Activated CD4-positive, alpha-beta memory T cell treated with anti-CD3 and anti-CD28 coated beads for 36 hours (primary cell): ENCODE measurements at regions of chr12 and their contacts with region 1.

Region 1: DNA sequence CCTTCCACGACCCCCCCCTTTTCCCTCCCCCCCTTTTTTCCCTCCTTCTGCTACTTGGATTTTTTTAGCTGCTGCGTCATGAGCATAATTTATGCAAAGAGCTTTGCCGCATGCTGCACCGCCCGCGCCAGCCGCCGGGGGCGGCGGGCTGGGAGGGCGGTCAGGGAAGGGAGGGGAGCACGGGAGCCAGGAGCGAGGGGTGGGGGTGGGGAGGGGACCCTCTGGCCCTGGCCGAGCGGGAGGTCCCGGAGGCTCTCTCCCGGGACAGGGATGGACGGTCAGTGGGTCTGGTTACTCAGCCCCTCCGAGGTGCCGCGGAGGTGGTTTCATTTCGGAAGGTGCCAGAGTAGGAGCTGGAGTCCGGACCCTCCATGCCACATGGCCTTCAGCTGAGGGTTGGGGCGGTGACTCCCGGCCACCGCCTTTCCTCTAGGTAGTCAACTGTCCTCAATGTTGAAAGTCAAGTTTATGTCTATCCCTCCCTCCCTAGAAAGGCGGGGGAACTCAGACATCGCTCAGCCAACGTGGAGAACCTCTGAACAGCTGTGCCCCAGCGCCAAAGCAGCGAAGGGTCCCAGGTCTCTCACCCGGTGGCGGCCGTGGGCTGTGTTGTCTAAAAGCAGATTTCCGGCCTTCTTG is at the start of gene POU6F1:
- DNase-seq: peak; percentile 77
- H3K4me3 Mint-ChIP-seq: peak within 1 kb of the TSS; percentile 79
- H3K27ac Mint-ChIP-seq: peak within 1 kb of the TSS; percentile 88
- H3K4me1 Mint-ChIP-seq: peaks cover 18% of the 10 kb centered on the region
- H3K27me3 Mint-ChIP-seq: no peaks in the 10 kb centered on the region
- total RNA-seq, gene POU6F1: 12.1 to 12.4 TPM

Region 2: GRCh38 chr12:51047655-51048540 is 170.2 kb before region 1 on chr12 and contains the start of gene LETMD1:
- CTCF ChIA-PET with region 1: interaction called, 3 read pairs
- POLR2A ChIA-PET with region 1: interaction called, 4 read pairs
- intact Hi-C with region 1: loop called (anchors 1 kb)
- DNase-seq: peak; percentile 95
- H3K4me3 Mint-ChIP-seq: peak within 1 kb of the TSS; percentile 97
- H3K27ac Mint-ChIP-seq: peak within 1 kb of the TSS; percentile 96
- H3K4me1 Mint-ChIP-seq: peaks cover 31% of the 10 kb centered on the region
- H3K27me3 Mint-ChIP-seq: no peaks in the 10 kb centered on the region
- total RNA-seq, gene LETMD1: 79.8 to 84.0 TPM

Region 3: GRCh38 chr12:51172515-51173431 is 45.3 kb before region 1 on chr12 and contains the start of gene TFCP2:
- CTCF ChIA-PET with region 1: interaction called, 3 read pairs
- POLR2A ChIA-PET with region 1: interaction called, 6 read pairs
- intact Hi-C with region 1: loop called (anchors 1 kb)
- DNase-seq: peak; percentile 96
- H3K4me3 Mint-ChIP-seq: peak within 1 kb of the TSS; percentile 63
- H3K27ac Mint-ChIP-seq: no peak within 1 kb of the TSS
- H3K4me1 Mint-ChIP-seq: peaks cover 9% of the 10 kb centered on the region
- H3K27me3 Mint-ChIP-seq: no peaks in the 10 kb centered on the region
- total RNA-seq, gene TFCP2: 32.0 to 34.1 TPM

Region 4: DNA sequence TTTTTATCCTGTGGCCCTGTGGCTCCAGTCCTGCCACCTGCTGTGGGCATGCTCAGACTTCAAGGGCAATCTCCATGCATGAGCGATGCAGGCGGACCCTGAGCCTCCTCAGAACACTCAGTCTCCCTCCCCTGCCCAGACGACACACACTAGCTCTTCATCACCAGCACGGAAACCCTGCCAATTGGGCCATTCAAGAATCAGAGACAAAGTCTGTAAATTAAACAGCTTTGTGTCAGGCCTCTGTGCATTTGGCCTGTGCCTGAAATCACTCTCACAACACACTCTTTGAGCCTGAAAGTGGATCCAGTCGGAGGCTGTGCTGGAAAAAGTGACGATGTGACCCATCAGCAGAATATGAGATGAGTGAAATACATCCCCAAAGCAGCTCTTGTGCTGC is 12.7 kb before region 1 on chr12:
- CTCF ChIA-PET with region 1: interaction called, 11 read pairs
- POLR2A ChIA-PET with region 1: interaction called, 17 read pairs
- intact Hi-C with region 1: no loop called
- DNase-seq: no peak
- H3K4me3 Mint-ChIP-seq: no peak overlapping the region
- H3K27ac Mint-ChIP-seq: no peak overlapping the region
- H3K4me1 Mint-ChIP-seq: peaks cover 22% of the 10 kb centered on the region
- H3K27me3 Mint-ChIP-seq: no peaks in the 10 kb centered on the region

Region 5: DNA sequence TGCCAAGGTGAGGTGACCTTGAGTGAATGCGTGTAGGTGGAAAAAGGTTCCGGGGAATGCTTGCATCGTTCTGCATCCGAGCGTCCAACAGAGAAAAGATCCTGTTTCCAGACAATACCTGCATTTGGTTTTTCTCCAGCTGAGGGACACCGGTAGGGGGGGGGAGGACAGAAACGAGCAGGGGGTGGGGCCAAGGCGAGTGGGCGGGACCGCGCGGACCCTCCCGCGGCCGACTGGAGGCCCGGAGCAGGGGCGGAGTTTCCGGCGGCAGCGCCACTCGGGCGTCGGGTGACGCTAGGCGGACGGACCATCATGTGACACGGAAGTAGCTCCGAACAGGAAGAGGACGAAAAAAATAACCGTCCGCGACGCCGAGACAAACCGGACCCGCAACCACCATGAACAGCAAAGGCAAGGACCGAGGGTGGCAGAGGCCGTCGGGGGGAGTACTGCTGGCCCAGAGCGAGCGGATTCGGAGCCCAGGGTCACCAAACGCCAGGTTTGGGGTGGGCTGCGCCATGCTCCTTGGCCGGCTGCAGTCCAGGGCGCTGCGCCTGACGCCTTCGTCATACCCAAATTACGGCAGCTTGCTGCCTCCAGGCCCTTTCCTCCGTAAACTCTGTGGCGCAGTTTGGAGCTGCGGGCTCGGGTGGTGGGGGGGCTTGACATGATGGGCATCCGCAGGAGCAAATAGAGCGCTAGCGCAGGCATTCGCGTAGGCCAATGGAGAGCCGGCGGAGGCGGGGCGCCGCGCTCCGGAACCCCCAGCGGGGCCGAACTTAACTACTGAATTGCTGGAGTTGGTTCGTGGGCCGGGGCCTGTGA is 20.6 kb after region 1 on chr12 and contains the start of gene DAZAP2:
- CTCF ChIA-PET with region 1: interaction called, 17 read pairs
- POLR2A ChIA-PET with region 1: interaction called, 16 read pairs
- intact Hi-C with region 1: loop called (anchors 1 kb)
- DNase-seq: peak; percentile 97
- H3K4me3 Mint-ChIP-seq: peak within 1 kb of the TSS; percentile 94
- H3K27ac Mint-ChIP-seq: peak within 1 kb of the TSS; percentile 98
- H3K4me1 Mint-ChIP-seq: peaks cover 33% of the 10 kb centered on the region
- H3K27me3 Mint-ChIP-seq: no peaks in the 10 kb centered on the region
- total RNA-seq, gene DAZAP2: 106 to 119 TPM

Region 6: GRCh38 chr12:51368640-51369517 is 150.8 kb after region 1 on chr12:
- CTCF ChIA-PET with region 1: no interaction called
- POLR2A ChIA-PET with region 1: interaction called, 11 read pairs
- intact Hi-C with region 1: no loop called
- DNase-seq: peak; percentile 95
- H3K4me3 Mint-ChIP-seq: peak overlapping the region; percentile 61
- H3K27ac Mint-ChIP-seq: peak overlapping the region; percentile 86
- H3K4me1 Mint-ChIP-seq: peaks cover 51% of the 10 kb centered on the region
- H3K27me3 Mint-ChIP-seq: no peaks in the 10 kb centered on the region